Activated CD4-positive, alpha-beta memory T cell treated with anti-CD3 and anti-CD28 coated beads for 36 hours (primary cell): ENCODE measurements at regions of chr5 and their contacts with region 1.

Region 1: DNA sequence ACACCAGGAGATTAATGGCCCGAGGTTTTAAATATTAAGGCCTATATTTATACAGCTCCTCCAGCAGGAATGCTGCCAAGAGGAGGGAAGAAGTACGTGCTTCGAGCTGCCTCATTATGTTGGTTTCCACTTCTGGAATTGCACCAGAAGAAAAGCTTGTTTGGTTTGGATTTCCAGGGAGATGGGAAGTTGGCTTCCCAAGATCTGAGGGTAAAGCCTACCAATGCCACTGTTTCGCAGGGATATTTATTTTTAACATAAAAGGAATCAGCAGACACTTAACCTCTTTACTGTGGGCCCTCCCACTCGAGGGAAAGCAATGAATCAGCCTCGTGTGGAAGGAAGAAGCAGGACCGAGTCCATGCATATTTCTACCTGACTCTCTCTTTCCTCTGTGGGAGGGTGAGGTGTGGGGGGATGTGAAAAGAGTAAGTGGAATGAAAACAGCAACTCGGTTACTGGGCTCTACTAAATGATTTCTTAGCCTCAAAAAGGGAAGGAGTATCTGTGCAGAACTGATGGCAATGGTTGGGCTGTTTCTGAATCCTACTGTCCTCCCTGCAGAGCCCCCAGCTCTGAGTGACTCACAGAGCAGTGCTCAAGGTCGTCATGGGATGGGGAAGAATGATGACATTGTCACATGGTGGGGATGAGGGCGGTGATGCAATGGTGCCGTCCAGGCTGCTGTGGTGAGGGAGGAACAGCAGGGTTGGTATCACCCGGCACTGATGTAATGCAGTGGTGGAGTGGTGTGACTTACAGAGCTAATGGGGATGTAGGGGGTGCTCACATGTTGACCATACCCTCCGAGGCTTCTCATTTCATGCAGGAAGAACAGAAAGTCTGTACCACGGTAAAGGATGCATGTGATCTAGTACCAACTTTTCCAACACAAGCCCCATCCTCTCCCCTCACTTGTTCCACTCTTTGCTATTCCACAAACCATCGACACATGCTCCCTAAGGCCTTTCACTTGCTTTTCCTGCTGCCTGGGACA is 215.0 kb upstream of the PANK3 start:
- DNase-seq: peak; percentile 67
- H3K4me3 Mint-ChIP-seq: no peak overlapping the region
- H3K27ac Mint-ChIP-seq: peak overlapping the region; percentile 69
- H3K4me1 Mint-ChIP-seq: peaks cover 34% of the 10 kb centered on the region
- H3K27me3 Mint-ChIP-seq: peaks cover 10% of the 10 kb centered on the region

Region 2: DNA sequence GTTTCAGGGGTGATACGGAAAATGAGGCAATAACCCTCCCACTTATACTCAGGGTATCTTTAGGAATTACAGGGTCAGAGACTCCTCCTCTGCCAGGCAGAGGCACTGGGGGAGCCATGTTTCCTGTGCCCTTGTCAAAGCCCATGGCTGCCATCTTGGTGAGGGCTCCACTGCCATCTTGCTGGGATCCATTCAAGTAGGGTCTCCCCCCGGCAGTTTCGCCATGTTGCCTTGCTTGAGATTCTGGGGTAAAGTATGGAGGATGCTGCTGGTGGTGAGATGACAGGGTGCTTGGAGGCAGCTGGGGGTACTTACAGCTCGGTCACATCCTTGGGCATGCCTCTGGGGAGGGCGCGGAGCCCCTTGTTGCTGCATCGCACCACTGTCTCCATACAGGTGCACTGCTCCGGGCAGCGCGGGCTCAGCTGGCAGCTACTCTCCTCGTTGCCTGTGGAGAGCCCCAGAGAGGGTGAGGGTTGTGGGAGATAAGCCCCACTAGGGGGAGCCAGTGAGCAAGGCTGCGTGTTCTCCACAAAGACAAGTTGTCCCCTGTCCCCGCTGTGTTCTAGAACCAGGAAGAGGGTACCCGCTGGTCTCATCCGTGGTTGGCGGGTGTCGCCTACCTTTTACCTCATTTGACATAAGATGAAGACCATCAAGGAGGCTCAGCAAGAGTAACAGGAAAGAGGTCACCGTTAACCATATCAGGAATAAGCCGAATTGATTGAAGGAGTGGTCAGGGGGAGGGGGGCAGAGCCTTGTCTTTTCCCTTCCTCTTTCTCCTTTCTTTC is 46.0 kb before region 1 on chr5:
- CTCF ChIA-PET with region 1: no interaction called
- POLR2A ChIA-PET with region 1: no interaction called
- intact Hi-C with region 1: loop called (anchors 5 kb)
- DNase-seq: peak; percentile 72
- H3K4me3 Mint-ChIP-seq: no peak overlapping the region
- H3K27ac Mint-ChIP-seq: no peak overlapping the region
- H3K4me1 Mint-ChIP-seq: peaks cover 10% of the 10 kb centered on the region
- H3K27me3 Mint-ChIP-seq: peaks cover 1% of the 10 kb centered on the region

Region 3: DNA sequence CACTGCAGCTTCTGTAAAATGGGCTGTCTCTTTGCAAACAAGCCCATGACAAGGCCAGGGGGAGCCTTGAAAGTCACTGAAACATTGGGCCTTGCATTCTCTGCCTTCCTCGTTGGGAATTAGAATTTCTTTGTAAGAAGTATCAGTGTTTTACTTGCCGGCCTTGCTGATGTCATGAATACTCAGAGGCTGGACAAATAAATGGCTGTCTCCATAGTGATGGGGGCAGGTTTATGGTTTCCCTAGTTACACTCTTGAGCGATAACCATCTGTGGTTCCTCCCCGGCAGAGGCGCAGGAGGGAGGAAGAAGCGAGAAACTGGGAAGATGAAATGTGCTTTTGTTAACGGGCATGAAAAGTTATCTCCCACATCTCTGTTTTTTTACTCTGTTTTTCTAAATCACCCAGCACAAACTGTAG is 57.8 kb after region 1 on chr5:
- CTCF ChIA-PET with region 1: no interaction called
- POLR2A ChIA-PET with region 1: no interaction called
- intact Hi-C with region 1: loop called (anchors 1 kb)
- DNase-seq: peak; percentile 49
- H3K4me3 Mint-ChIP-seq: peak overlapping the region; percentile 1
- H3K27ac Mint-ChIP-seq: peak overlapping the region; percentile 65
- H3K4me1 Mint-ChIP-seq: peaks cover 12% of the 10 kb centered on the region
- H3K27me3 Mint-ChIP-seq: peaks cover 10% of the 10 kb centered on the region